ENCODE measurements at regions of chr1 and their contacts with region 1.

Region 1: GRCh38 chr1:31931593-31932225 is 6.5 kb downstream of the PTP4A2 start:
- DNase-seq: no peak
- H3K4me3 Mint-ChIP-seq: peak overlapping the region; percentile 75
- H3K27ac Mint-ChIP-seq: peak overlapping the region; percentile 92
- H3K4me1 Mint-ChIP-seq: peaks cover 81% of the 10 kb centered on the region
- H3K27me3 Mint-ChIP-seq: no peaks in the 10 kb centered on the region

Region 2: DNA sequence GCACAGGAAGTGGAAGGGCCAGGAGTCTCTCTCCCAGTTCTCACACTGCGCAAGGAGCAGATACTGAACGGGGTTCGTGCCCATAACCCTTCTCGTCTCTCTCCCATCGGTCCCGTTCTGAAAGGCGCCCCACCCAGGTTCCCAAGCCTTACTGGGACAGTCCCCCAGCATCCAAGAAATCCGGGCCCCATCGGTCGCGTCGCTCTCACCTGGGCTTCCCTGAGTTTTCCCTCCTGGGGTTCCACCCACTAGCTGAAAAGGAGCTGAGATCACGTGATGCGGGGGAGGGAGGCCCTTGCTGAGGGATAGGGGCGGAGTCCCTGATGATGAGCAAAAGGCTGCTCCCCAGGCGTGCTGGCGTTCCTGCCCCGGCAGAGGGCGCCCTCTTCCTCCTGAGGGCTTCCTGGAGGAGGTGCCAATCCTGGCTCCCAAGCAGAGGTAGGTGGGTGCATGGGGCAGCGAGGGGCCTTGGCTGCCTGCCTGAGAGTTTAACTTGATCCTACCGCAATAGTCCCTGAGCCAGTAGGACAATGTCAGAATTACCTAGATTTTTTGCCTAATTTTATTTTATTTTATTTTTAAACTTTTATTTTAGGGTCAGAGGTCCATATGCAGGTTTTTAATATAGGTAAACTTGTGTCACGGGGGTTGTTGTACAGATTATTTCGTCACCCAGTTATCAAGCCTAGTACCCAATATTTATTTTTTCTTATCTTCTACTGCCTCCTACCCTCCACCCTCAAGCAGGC is 115.8 kb before region 1 on chr1 and contains the start of gene SPOCD1:
- intact Hi-C with region 1: loop called (anchors 1 kb)
- DNase-seq: peak; percentile 77
- H3K4me3 Mint-ChIP-seq: no peak within 1 kb of the TSS
- H3K27ac Mint-ChIP-seq: no peak within 1 kb of the TSS
- H3K4me1 Mint-ChIP-seq: peaks cover 7% of the 10 kb centered on the region
- H3K27me3 Mint-ChIP-seq: no peaks in the 10 kb centered on the region
- total RNA-seq, gene SPOCD1: 0.07 TPM in 1 of 2 replicates, not detected in the other

Region 3: DNA sequence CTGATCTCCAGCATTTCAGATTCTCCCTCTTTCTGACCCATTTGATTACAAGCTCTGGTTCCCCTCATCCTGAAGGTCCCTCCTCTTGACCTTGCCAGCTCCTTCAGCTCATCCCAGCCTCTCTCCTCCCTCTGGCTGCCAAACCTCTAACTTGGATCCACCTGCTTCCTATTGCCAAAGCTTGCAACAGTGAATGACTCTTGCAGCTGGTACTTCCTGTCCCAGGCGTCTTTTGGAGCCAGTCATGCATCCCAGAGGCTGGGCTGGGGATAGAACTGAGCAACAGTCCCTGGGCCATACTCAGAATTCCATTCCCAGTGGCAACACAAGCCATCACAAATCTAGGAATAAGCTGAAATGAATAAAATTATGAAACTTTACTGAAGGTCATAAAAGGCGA is 88.2 kb before region 1 on chr1:
- intact Hi-C with region 1: no loop called
- DNase-seq: no peak
- H3K4me3 Mint-ChIP-seq: no peak overlapping the region
- H3K27ac Mint-ChIP-seq: no peak overlapping the region
- H3K4me1 Mint-ChIP-seq: peaks cover 26% of the 10 kb centered on the region
- H3K27me3 Mint-ChIP-seq: no peaks in the 10 kb centered on the region

Region 4: GRCh38 chr1:31891280-31891679 is 40.4 kb before region 1 on chr1:
- intact Hi-C with region 1: loop called (anchors 1 kb)
- DNase-seq: peak; percentile 21
- H3K4me3 Mint-ChIP-seq: no peak overlapping the region
- H3K27ac Mint-ChIP-seq: peak overlapping the region; percentile 52
- H3K4me1 Mint-ChIP-seq: peaks cover 32% of the 10 kb centered on the region
- H3K27me3 Mint-ChIP-seq: no peaks in the 10 kb centered on the region

Region 5: GRCh38 chr1:31910933-31911332 is 20.8 kb before region 1 on chr1:
- intact Hi-C with region 1: loop called (anchors 1 kb)
- DNase-seq: no peak
- H3K4me3 Mint-ChIP-seq: peak overlapping the region; percentile 37
- H3K27ac Mint-ChIP-seq: peak overlapping the region; percentile 75
- H3K4me1 Mint-ChIP-seq: peaks cover 59% of the 10 kb centered on the region
- H3K27me3 Mint-ChIP-seq: no peaks in the 10 kb centered on the region

Region 6: DNA sequence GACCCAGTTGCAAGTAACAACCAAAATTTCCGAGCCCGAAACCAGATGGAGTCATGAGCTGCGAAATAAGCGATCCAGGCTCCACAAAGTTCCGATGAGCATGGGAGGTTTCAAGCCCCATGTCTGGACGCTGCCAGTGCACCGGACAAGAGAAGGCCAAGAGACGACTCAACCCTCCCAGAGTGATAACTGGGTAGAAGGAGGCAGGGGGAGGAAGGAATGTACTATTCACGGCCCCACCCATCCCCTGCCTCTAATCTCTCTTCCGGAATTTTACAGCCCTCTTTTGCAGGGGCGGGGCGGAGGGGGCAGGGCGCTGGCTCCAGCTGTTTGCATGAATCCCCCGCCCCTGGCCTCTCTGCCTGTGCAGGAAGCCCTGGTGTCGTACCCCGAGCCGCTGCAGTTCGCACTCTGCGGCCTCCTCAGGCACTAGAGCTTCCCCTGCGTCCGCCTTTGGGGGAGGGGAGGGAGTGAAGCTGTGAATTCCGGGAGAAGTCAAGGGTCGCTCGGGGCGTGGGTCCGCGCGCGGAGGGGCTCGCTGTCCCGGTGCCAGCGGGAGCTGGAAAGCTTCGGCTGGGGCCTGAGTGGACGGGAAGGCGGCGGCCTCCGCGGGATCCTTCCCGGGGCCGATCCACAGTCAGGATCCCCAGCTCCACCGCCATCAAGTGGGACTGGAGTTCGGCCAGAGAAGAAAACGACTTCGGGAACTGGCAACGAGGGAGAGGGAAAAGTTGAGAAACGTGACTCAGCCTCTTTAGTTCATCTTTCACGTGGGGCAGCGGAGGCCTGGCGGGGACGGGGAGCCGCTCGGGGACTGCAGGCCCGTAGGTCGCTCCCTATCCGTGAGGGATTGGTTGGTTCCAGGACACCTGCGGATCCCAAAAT is 12.7 kb after region 1 on chr1:
- intact Hi-C with region 1: loop called (anchors 2 kb)
- DNase-seq: peak; percentile 87
- H3K4me3 Mint-ChIP-seq: peak overlapping the region; percentile 78
- H3K27ac Mint-ChIP-seq: peak overlapping the region; percentile 94
- H3K4me1 Mint-ChIP-seq: peaks cover 39% of the 10 kb centered on the region
- H3K27me3 Mint-ChIP-seq: no peaks in the 10 kb centered on the region